ENCODE measurements at regions of chr2 and their contacts with region 1.

Region 1: DNA sequence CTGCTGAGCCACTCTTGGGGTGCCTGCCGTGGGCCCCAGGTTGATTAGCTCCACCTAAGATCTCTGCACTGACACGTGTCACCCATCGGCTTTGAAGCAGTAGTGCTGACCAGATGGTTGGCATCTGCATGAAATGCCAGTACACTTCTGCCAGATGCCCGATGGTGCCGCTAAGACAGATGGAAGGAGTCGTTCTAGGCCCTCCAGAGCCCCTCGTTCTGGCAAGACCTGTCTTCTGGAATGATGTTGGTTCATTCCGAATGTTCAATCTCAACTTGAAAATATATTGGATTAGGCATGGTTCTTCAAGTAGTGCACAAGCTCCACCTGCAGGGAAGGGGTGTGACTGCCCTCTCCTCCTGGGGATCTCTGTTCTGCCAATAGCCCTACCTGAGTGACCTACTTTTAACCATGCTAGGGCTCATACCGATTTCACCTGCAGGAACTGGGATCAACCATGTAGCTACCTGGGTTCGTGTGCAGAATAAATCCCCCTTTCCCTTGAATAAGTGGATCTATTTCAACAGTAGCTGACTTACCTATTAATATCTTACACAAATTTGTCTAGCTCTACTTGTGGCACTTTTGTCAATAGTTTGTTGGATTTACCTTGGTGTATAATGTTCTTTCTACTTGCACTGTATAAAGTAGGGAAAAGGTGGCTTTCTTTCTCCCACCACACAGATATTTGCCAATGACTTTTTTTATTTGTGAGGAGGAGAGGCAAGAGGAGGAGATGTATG is 342.6 kb downstream of the CTNNA2 start:
- DNase-seq: peak; percentile 10
- H3K4me3 Mint-ChIP-seq: no peak overlapping the region
- H3K27ac Mint-ChIP-seq: no peak overlapping the region
- H3K4me1 Mint-ChIP-seq: no peaks in the 10 kb centered on the region
- H3K27me3 Mint-ChIP-seq: peaks cover 20% of the 10 kb centered on the region
- CTCF ChIP-seq: peak; percentile 42

Region 2: GRCh38 chr2:79041032-79041448 is 814.4 kb before region 1 on chr2:
- CTCF ChIA-PET with region 1: interaction called, 21 read pairs
- POLR2A ChIA-PET with region 1: no interaction called
- intact Hi-C with region 1: loop called (anchors 1 kb)
- DNase-seq: no peak
- H3K4me3 Mint-ChIP-seq: no peak overlapping the region
- H3K27ac Mint-ChIP-seq: no peak overlapping the region
- H3K4me1 Mint-ChIP-seq: no peaks in the 10 kb centered on the region
- H3K27me3 Mint-ChIP-seq: no peaks in the 10 kb centered on the region
- CTCF ChIP-seq: peak; percentile 34

Region 3: DNA sequence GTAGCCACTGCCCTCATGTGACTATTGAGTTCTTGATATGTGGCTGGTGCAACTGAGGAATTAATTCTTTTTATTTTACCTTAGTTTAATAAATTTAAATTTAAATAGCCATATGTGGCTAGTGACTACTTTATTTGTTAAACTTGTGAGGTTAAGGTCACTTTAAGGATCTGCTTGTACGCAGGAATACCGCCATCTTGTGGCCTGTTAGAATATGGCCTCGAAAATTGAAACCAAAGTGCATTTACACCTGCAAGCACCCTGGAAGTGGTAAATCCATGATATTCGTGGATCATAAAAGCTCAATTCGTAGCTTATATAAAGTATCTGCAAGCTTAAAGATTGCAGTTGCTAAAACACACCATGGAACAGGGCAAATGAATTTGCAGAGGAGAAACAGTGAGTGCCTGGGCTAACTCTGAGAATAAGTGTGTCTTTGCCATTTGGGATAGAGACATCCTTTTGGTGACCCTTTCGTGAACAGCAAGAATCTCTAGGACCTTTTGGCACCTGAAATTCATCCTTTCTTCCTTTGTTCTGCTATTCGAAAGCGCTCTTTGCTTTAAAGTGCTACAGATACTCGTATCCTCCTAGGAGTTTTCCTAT is 635.9 kb before region 1 on chr2:
- CTCF ChIA-PET with region 1: interaction called, 22 read pairs
- POLR2A ChIA-PET with region 1: no interaction called
- intact Hi-C with region 1: loop called (anchors 1 kb)
- DNase-seq: peak; percentile 40
- H3K4me3 Mint-ChIP-seq: no peak overlapping the region
- H3K27ac Mint-ChIP-seq: no peak overlapping the region
- H3K4me1 Mint-ChIP-seq: peaks cover 18% of the 10 kb centered on the region
- H3K27me3 Mint-ChIP-seq: no peaks in the 10 kb centered on the region
- CTCF ChIP-seq: peak; percentile 77

Region 4: GRCh38 chr2:79235135-79235534 is 620.3 kb before region 1 on chr2:
- CTCF ChIA-PET with region 1: interaction called, 28 read pairs
- POLR2A ChIA-PET with region 1: no interaction called
- intact Hi-C with region 1: loop called (anchors 5 kb)
- DNase-seq: no peak
- H3K4me3 Mint-ChIP-seq: no peak overlapping the region
- H3K27ac Mint-ChIP-seq: no peak overlapping the region
- H3K4me1 Mint-ChIP-seq: no peaks in the 10 kb centered on the region
- H3K27me3 Mint-ChIP-seq: peaks cover 12% of the 10 kb centered on the region
- CTCF ChIP-seq: peak; percentile 29

Region 5: DNA sequence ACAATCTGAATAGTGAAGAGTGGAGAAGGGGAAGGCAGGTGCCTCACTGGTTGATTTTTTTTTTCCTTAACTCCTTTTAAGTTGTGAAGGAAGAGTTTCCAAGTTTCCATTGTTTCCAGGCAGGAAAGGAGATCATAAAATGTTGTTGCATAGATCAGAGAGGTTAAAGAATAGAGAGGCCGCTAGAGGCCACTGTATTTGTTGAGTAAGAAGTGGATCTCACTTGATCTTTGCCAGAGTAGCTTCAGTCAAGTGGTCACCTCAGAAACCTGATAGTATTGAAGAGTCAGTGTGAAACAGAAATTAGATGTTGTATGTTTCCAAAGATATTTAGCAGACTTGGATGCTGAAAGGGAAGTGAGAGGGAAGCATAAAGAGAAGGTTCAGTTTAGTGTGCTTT is 325.0 kb before region 1 on chr2:
- CTCF ChIA-PET with region 1: interaction called, 22 read pairs
- POLR2A ChIA-PET with region 1: interaction called, 3 read pairs
- intact Hi-C with region 1: loop called (anchors 1 kb)
- DNase-seq: peak; percentile 6
- H3K4me3 Mint-ChIP-seq: no peak overlapping the region
- H3K27ac Mint-ChIP-seq: no peak overlapping the region
- H3K4me1 Mint-ChIP-seq: no peaks in the 10 kb centered on the region
- H3K27me3 Mint-ChIP-seq: no peaks in the 10 kb centered on the region
- CTCF ChIP-seq: peak; percentile 24

Region 6: GRCh38 chr2:79547568-79547967 is 307.9 kb before region 1 on chr2:
- CTCF ChIA-PET with region 1: interaction called, 12 read pairs
- POLR2A ChIA-PET with region 1: no interaction called
- intact Hi-C with region 1: no loop called
- DNase-seq: no peak
- H3K4me3 Mint-ChIP-seq: no peak overlapping the region
- H3K27ac Mint-ChIP-seq: no peak overlapping the region
- H3K4me1 Mint-ChIP-seq: no peaks in the 10 kb centered on the region
- H3K27me3 Mint-ChIP-seq: no peaks in the 10 kb centered on the region
- CTCF ChIP-seq: no peak

Region 7: DNA sequence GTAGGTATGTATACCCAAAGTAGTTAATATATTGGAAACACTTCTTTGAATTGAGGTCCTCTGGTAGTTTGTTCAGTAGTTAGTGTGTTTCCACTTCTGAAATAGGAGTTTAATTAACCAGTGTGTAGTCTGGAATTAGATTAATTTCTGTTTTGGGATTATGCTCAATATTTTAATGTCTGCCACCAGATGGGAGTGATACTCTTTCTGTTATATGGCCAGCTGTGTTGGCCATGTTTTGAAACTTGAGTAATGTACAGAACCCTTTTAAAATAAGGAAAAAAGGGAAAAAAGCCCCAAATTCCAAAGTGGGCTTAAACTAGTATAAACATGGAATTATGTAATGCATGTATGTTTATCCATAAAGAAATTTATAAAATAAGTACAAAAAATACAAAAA is 194.9 kb before region 1 on chr2:
- CTCF ChIA-PET with region 1: interaction called, 4 read pairs
- POLR2A ChIA-PET with region 1: no interaction called
- intact Hi-C with region 1: loop called (anchors 1 kb)
- DNase-seq: no peak
- H3K4me3 Mint-ChIP-seq: no peak overlapping the region
- H3K27ac Mint-ChIP-seq: no peak overlapping the region
- H3K4me1 Mint-ChIP-seq: peaks cover 6% of the 10 kb centered on the region
- H3K27me3 Mint-ChIP-seq: no peaks in the 10 kb centered on the region
- CTCF ChIP-seq: no peak

Region 8: GRCh38 chr2:79920512-79921076 is 65.2 kb after region 1 on chr2:
- CTCF ChIA-PET with region 1: no interaction called
- POLR2A ChIA-PET with region 1: no interaction called
- intact Hi-C with region 1: no loop called
- DNase-seq: no peak
- H3K4me3 Mint-ChIP-seq: no peak overlapping the region
- H3K27ac Mint-ChIP-seq: no peak overlapping the region
- H3K4me1 Mint-ChIP-seq: no peaks in the 10 kb centered on the region
- H3K27me3 Mint-ChIP-seq: no peaks in the 10 kb centered on the region
- CTCF ChIP-seq: no peak

Region 9: GRCh38 chr2:80141007-80141726 is 285.7 kb after region 1 on chr2:
- CTCF ChIA-PET with region 1: no interaction called
- POLR2A ChIA-PET with region 1: no interaction called
- intact Hi-C with region 1: no loop called
- DNase-seq: no peak
- H3K4me3 Mint-ChIP-seq: no peak overlapping the region
- H3K27ac Mint-ChIP-seq: no peak overlapping the region
- H3K4me1 Mint-ChIP-seq: no peaks in the 10 kb centered on the region
- H3K27me3 Mint-ChIP-seq: no peaks in the 10 kb centered on the region
- CTCF ChIP-seq: no peak

Measured in MCF 10A (cell line).